Mucosa of descending colon (tissue), 3 donors: ENCODE measurements at regions of chr18 and their contacts with region 1.

Region 1: DNA sequence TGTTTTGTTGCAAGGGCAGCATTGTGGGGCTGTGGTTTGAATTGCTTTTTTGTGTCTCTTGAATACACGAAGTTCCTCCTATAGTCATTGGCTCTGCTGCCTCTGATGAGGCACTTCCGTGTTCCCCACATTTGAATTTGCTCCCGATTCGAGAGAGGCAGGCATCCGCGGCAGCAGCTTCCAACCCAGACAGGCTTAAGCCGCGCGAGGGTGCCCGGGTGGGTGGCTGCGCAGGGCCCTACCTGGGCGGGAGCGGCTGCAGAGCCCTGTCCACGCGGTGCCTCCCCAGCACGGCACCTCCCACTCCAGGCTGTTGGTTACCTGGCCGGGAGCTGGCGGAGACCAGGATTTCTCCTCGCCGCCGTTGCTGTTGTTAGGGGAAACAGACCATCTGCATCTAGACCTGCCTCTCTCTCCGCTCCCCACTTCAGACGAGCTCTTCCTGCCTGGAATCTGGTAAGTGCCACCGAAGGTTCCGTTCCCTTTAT is 151.3 kb downstream of the NEDD4L start:
- DNase-seq: peak; percentile 67 to 77 (median 76)
- ATAC-seq: peak; percentile 67
- H3K4me3 ChIP-seq: peak overlapping the region; percentile 1
- H3K4me1 ChIP-seq: peaks cover 20% of the 10 kb centered on the region
- CTCF ChIP-seq: no peak

Region 2: DNA sequence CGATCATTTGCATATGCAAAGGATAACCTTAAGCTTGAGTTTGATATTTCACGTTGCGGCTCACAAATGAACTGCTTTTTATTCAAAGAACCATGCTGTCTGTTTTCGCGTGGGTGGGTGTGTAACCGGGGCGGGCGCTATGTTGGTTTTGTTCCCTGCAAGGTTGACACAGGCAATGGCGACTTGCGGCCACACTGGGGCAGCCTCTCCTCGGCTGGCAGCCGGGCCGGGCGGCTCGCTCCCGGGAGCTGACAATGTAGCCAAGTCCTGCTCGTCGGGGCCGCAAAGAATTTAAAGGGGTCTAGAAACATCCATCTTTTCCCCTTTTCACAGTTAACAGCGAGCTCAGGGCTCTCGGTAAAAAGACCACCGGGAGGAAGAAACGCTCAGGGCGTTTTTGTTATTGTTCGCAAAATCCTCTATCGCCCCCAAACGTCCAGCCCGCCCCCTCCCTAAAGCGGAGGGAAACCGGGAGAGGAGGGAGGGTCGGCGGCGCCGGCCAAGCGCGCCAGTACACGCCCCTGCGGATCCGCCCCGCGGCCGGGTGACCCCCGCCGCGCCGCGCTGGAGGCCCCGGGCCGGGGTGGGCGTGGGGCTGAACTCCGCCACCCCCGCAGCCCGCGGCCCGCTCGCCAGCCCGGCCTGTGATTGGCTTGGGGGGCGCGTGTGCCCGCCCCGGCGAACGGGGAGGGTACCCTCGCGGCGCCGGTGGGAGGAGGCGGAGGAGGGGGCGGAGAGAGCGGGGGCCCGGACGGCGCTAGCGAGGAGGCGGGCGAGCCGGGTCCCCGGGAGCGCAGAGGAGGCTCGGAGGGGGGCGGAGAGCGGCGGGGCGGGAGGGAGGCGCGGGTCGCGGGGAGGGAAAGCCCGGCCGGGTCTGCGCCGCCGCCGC is 151.6 kb before region 1 on chr18 and contains the start of gene NEDD4L:
- intact Hi-C with region 1: no loop called
- DNase-seq: peak; percentile 89 to 91 (median 91)
- ATAC-seq: peak; percentile 81
- H3K4me3 ChIP-seq: peak within 1 kb of the TSS; percentile 77
- H3K4me1 ChIP-seq: peaks cover 7% of the 10 kb centered on the region
- CTCF ChIP-seq: peak; percentile 66
- total RNA-seq, gene NEDD4L: 161 to 309 (median 256) TPM

Region 3: DNA sequence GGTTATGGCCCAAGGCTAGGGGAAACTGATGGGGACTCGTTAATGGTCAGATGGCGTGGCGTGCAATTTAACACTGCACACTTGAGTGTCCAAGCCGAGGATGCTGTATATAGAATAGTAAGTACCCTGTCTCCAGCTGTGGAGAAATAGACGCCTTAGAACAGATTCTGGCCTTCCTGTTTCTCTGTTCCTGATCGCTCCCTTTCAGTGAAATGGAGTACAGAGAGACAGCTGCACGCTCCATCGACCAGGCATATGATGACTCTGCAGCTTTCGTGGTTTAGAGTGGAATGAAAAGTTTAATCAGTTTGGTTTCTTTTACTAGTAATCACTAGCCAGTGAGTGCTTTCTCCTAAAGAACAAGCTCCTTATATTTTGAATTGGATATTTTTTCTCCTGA is 62.1 kb after region 1 on chr18:
- intact Hi-C with region 1: loop called in 1 of 2 experiments (anchors 10 kb)
- DNase-seq: no peak
- ATAC-seq: peak; percentile 13
- H3K4me3 ChIP-seq: no peak overlapping the region
- H3K4me1 ChIP-seq: peaks cover 3% of the 10 kb centered on the region
- CTCF ChIP-seq: no peak

Region 4: DNA sequence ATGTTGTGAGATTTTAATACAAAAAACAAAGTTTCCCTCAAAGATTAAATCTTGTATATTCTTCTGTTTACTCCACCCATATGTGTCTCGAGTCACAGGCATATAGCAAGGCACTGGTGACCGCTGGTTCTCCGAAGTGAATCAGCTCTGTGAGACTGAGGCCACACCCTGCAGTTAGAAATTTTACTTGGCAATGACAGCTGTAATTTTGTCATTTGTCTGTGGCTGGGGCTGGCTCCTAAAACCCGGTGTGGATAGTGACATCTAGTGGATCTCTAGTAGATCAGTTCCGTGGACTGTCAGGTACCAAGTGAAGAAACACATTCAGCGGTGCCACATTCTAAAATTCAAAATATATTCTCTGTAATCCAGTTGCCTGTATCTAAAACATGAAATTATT is 126.7 kb after region 1 on chr18:
- intact Hi-C with region 1: loop called in 1 of 2 experiments (anchors 10 kb)
- DNase-seq: peak; percentile 60 to 73 (median 60)
- ATAC-seq: peak; percentile 87
- H3K4me3 ChIP-seq: no peak overlapping the region
- H3K4me1 ChIP-seq: peaks cover 13% of the 10 kb centered on the region
- CTCF ChIP-seq: peak; percentile 28

Region 5: DNA sequence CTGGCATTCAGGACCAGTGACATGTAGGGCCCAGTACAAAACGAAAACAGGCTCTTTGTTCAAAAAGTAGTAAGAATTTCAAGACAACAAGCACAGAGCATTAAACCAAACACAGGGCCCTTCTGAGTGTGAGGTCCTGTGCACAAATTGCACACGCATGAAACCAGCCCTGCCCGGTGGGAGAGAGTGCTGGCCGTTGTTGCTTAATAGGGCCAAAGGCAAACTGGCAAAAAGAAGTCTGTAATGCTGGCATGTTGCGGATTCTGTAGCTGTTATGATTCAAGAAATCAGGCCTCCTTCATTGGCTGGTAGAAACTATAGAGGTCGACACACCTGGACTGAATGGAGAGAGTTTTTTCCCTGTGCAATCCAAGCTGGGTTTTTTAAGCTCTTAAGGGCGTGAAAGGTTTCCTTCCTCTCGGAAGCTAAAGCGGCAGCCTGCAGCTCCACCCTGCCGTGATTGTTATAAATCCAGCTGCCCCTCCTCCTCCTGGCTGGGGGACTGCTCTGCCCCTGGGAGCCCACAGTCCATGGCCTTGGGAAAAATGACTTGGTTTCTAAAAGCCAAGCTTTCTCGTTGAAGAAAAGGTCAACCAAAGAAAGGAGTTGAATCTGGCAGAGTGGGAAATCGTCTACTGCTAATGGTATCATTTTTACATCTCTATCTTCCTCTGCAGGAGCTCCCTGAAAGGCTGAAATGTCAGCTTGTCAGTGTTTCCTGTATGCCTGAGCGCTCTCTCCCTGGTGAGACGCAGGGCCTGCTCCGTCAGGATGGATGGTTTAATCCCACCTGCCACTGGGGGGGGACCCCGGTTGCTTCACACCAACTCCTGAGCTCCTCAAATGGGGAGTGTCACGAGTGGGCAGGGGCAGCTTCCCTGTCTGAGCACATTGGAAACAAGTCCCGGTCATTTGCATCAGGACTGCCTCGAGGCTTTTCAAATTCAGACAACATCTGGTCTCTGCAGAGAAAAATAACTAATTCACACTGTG is 290.0 kb after region 1 on chr18:
- intact Hi-C with region 1: no loop called
- DNase-seq: peak in 2 of 3 donors; percentile 49 to 57
- ATAC-seq: peak; percentile 84
- H3K4me3 ChIP-seq: no peak overlapping the region
- H3K4me1 ChIP-seq: peaks cover 11% of the 10 kb centered on the region
- CTCF ChIP-seq: no peak